ENCODE measurements at regions of chr1 and their contacts with region 1.

Region 1: DNA sequence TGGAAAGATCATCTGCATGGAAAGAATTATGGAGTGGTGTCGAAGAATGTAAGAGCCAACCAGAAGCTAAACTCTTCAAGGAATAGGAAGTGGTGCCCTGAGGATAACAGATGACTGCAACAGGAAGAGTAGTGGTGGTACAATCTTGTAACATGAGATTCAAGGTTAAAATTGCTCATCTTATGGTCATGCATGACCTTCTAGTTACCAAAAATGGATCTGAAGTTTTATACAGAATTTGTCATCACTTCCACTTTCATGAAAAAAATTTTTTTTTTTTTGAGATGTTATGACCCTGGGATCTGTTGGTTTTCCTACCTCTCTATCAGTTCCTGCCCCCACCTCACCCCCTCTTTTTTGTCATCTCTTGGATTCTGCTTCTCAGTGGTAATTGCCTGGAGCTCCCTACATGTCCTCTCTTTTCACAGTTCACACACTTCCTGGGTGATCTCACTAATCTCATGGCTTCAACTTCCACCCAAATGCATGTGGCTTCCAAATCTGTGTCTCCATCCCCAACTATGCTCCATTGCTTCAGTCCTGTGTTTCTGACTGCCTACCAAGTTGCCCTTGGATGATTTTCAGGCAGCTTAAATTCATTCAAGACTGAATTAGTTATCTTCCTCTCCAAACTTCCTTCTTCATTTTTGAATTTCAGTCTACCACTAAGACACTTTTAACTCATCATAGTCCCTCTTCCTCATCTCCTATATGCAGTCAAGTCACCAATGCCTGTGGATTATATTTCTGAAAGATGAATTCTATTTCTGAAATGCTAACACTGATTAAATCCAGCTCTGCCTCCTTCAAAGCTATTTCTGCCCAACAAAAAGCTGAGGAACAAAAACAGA is 48.4 kb downstream of the SLAMF6 start:
- DNase-seq: no peak
- ATAC-seq: no peak
- H3K4me3 ChIP-seq: no peak overlapping the region
- H3K4me3 Mint-ChIP-seq: no peak overlapping the region
- H3K27ac ChIP-seq: no peak overlapping the region
- H3K27ac Mint-ChIP-seq: no peak overlapping the region
- H3K4me1 ChIP-seq: peaks cover 17% of the 10 kb centered on the region in 2 donors
- H3K4me1 Mint-ChIP-seq: peaks cover 0 to 9% (median 1%) of the 10 kb centered on the region in 7 donors
- H3K27me3 ChIP-seq: no peaks in the 10 kb centered on the region
- H3K27me3 Mint-ChIP-seq: no peaks in the 10 kb centered on the region

Region 2: GRCh38 chr1:160437432-160438316 is 36.9 kb before region 1 on chr1:
- CTCF ChIA-PET with region 1: no interaction called
- POLR2A ChIA-PET with region 1: interaction called, 4 read pairs
- intact Hi-C with region 1: loop called in 1 of 2 experiments (anchors 2 kb)
- DNase-seq: peak in 6 of 9 donors; percentile 30 to 57 (median 41)
- ATAC-seq: peak; percentile 85
- H3K4me3 ChIP-seq: peak overlapping the region; percentile 59
- H3K4me3 Mint-ChIP-seq: peak overlapping the region; percentile 77 to 94 (median 82)
- H3K27ac ChIP-seq: peak overlapping the region; percentile 80
- H3K27ac Mint-ChIP-seq: peak overlapping the region; percentile 91 to 99 (median 96)
- H3K4me1 ChIP-seq: peaks cover 11 to 33% of the 10 kb centered on the region in 2 donors
- H3K4me1 Mint-ChIP-seq: peaks cover 22 to 53% (median 46%) of the 10 kb centered on the region in 7 donors
- H3K27me3 ChIP-seq: no peaks in the 10 kb centered on the region
- H3K27me3 Mint-ChIP-seq: no peaks in the 10 kb centered on the region

Region 3: GRCh38 chr1:160451119-160451858 is 23.3 kb before region 1 on chr1:
- CTCF ChIA-PET with region 1: interaction called, 3 read pairs
- POLR2A ChIA-PET with region 1: interaction called, 8 read pairs
- intact Hi-C with region 1: loop called in 1 of 2 experiments (anchors 2 kb)
- DNase-seq: no peak
- ATAC-seq: peak; percentile 16
- H3K4me3 ChIP-seq: no peak overlapping the region
- H3K4me3 Mint-ChIP-seq: peak overlapping the region in 9 of 10 donors; percentile 12 to 60 (median 51)
- H3K27ac ChIP-seq: no peak overlapping the region
- H3K27ac Mint-ChIP-seq: peak overlapping the region in 8 of 9 donors; percentile 4 to 86 (median 56)
- H3K4me1 ChIP-seq: peaks cover 21 to 33% of the 10 kb centered on the region in 2 donors
- H3K4me1 Mint-ChIP-seq: peaks cover 31 to 71% (median 68%) of the 10 kb centered on the region in 7 donors
- H3K27me3 ChIP-seq: no peaks in the 10 kb centered on the region
- H3K27me3 Mint-ChIP-seq: no peaks in the 10 kb centered on the region

Measured in naive thymus-derived CD4-positive, alpha-beta T cell (primary cell).